A673 (cell line): ENCODE measurements at regions of chr3 and their contacts with region 1.

Region 1: GRCh38 chr3:162292409-162292808 is 795.8 kb downstream of the OTOL1 start:
- DNase-seq: no peak
- H3K4me3 ChIP-seq: no peak overlapping the region
- H3K27ac ChIP-seq: no peak overlapping the region
- H3K4me1 ChIP-seq: no peaks in the 10 kb centered on the region
- H3K27me3 ChIP-seq: no peaks in the 10 kb centered on the region
- CTCF ChIP-seq: no peak

Region 2: DNA sequence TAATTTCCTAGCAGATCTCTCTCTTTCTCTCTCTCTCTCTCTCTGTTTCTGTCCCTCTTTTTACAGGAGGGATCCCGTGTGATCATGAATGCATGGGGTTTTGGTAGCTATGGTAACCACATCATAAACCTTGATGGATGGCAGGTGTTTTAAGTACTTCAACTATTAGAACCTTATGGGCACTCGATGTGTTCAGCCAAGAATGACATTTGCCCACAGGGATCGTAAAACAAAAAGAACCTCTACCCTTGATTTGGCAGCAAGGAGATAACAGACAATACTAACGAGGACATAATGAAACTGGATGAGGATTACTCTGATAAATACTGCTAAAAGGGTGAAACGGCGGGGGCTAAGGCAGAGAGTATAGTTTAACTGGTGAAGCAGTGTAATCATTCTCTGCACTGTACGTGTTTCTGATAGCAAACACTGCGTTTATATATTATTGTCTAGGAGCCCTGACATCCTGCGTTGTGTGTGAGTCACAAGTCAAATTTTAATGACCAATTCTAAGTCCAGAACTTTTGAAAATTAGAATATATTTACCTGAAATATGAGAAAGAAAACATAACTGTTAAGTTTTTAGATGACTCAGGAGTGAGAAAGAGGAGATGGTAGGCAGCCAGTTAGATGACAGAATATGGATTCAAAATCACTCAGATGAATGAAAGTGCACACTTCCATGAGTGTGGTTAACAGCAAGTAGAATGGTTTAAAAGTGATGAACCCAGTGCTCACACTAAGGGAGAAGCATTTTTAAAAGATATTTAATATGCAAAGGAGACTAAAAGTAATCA is 715.5 kb before region 1 on chr3:
- CTCF ChIA-PET with region 1: no interaction called
- POLR2A ChIA-PET with region 1: no interaction called
- intact Hi-C with region 1: no loop called
- DNase-seq: no peak
- H3K4me3 ChIP-seq: no peak overlapping the region
- H3K27ac ChIP-seq: no peak overlapping the region
- H3K4me1 ChIP-seq: no peaks in the 10 kb centered on the region
- H3K27me3 ChIP-seq: no peaks in the 10 kb centered on the region
- CTCF ChIP-seq: no peak

Region 3: GRCh38 chr3:162200836-162201235 is 91.6 kb before region 1 on chr3:
- CTCF ChIA-PET with region 1: no interaction called
- POLR2A ChIA-PET with region 1: no interaction called
- intact Hi-C with region 1: no loop called
- DNase-seq: no peak
- H3K4me3 ChIP-seq: no peak overlapping the region
- H3K27ac ChIP-seq: no peak overlapping the region
- H3K4me1 ChIP-seq: no peaks in the 10 kb centered on the region
- H3K27me3 ChIP-seq: no peaks in the 10 kb centered on the region
- CTCF ChIP-seq: no peak

Region 4: GRCh38 chr3:162262147-162262546 is 30.3 kb before region 1 on chr3:
- CTCF ChIA-PET with region 1: no interaction called
- POLR2A ChIA-PET with region 1: no interaction called
- intact Hi-C with region 1: no loop called
- DNase-seq: no peak
- H3K4me3 ChIP-seq: no peak overlapping the region
- H3K27ac ChIP-seq: no peak overlapping the region
- H3K4me1 ChIP-seq: no peaks in the 10 kb centered on the region
- H3K27me3 ChIP-seq: no peaks in the 10 kb centered on the region
- CTCF ChIP-seq: no peak

Region 5: GRCh38 chr3:162317046-162317445 is 24.6 kb after region 1 on chr3:
- CTCF ChIA-PET with region 1: no interaction called
- POLR2A ChIA-PET with region 1: no interaction called
- intact Hi-C with region 1: no loop called
- DNase-seq: no peak
- H3K4me3 ChIP-seq: no peak overlapping the region
- H3K27ac ChIP-seq: no peak overlapping the region
- H3K4me1 ChIP-seq: no peaks in the 10 kb centered on the region
- H3K27me3 ChIP-seq: no peaks in the 10 kb centered on the region
- CTCF ChIP-seq: no peak

Region 6: GRCh38 chr3:162517110-162517509 is 224.7 kb after region 1 on chr3:
- CTCF ChIA-PET with region 1: no interaction called
- POLR2A ChIA-PET with region 1: interaction called, 25 read pairs
- intact Hi-C with region 1: no loop called
- DNase-seq: peak; percentile 11
- H3K4me3 ChIP-seq: no peak overlapping the region
- H3K27ac ChIP-seq: no peak overlapping the region
- H3K4me1 ChIP-seq: no peaks in the 10 kb centered on the region
- H3K27me3 ChIP-seq: no peaks in the 10 kb centered on the region
- CTCF ChIP-seq: no peak; the same call in 1 of the 2 replicates